ENCODE measurements at regions of chr6 and their contacts with region 1.

Region 1: GRCh38 chr6:6556738-6557505 is 31.6 kb upstream of the LY86 start:
- DNase-seq: peak in 3 of 5 donors; percentile 43 to 52 (median 48)
- ATAC-seq: peak; percentile 36 to 81 (median 78)
- H3K4me3 ChIP-seq: no peak overlapping the region
- H3K27ac ChIP-seq: no peak overlapping the region
- H3K4me1 ChIP-seq: peaks cover 0 to 15% (median 0%) of the 10 kb centered on the region in 12 donors
- H3K27me3 ChIP-seq: no peaks in the 10 kb centered on the region
- CTCF ChIP-seq: peak; percentile 81 to 96 (median 88)
- POLR2A ChIP-seq: no peak

Region 2: DNA sequence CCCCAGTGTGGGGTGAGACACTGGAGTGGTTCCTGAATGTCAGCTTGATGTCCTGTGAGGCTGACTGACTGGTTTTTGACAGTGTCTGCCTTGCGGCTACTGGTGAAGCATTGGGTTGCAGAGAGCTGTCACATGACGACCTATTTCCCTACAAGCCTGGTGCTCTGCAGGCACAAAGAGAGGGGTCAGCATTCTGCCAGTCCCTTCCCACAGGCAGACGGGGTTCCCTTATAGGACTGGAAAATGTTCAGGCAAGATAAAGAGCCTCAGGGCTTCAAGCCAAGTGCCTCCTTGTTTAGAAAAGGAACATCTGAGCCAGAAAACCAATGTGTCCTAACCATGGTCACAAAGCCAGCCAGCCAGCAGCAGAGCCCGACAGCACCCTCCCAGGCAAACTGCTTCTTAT is 42.5 kb after region 1 on chr6:
- intact Hi-C with region 1: loop called in 1 of 10 experiments (anchors 5 kb)
- DNase-seq: peak in 4 of 5 donors; percentile 54 to 73 (median 60)
- ATAC-seq: peak; percentile 82 to 89 (median 86)
- H3K4me3 ChIP-seq: no peak overlapping the region
- H3K27ac ChIP-seq: peak overlapping the region in 4 of 12 donors; percentile 15 to 45 (median 36)
- H3K4me1 ChIP-seq: peaks cover 0 to 46% (median 35%) of the 10 kb centered on the region in 12 donors
- H3K27me3 ChIP-seq: no peaks in the 10 kb centered on the region
- CTCF ChIP-seq: no peak
- POLR2A ChIP-seq: no peak

Region 3: GRCh38 chr6:6610031-6610591 is 53.2 kb after region 1 on chr6:
- intact Hi-C with region 1: no loop called
- DNase-seq: no peak
- ATAC-seq: no peak
- H3K4me3 ChIP-seq: no peak overlapping the region
- H3K27ac ChIP-seq: peak overlapping the region in 1 of 12 donors; percentile 55
- H3K4me1 ChIP-seq: peaks cover 0 to 27% (median 0%) of the 10 kb centered on the region in 12 donors
- H3K27me3 ChIP-seq: no peaks in the 10 kb centered on the region
- CTCF ChIP-seq: no peak
- POLR2A ChIP-seq: no peak

Region 4: DNA sequence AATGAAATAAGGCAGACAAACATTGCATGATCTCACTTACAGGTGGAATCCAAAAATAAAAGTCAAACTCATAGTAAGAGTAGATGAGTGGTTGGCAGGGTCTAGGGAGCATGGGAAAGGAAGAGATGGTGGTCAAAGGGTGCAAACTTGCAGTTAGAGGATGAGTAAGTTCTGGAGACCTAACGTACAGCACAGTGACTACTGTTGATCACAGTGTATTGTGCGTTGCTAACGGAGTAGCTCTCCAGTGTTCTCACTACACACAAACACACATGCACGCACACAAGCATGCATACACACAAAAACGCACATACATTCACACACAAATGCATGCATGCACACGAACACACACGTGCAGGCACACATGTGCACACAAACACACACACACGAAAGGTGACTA is 86.5 kb after region 1 on chr6:
- intact Hi-C with region 1: loop called in 1 of 10 experiments (anchors 10 kb)
- DNase-seq: no peak
- ATAC-seq: no peak
- H3K4me3 ChIP-seq: no peak overlapping the region
- H3K27ac ChIP-seq: no peak overlapping the region
- H3K4me1 ChIP-seq: no peaks in the 10 kb centered on the region
- H3K27me3 ChIP-seq: no peaks in the 10 kb centered on the region
- CTCF ChIP-seq: no peak
- POLR2A ChIP-seq: no peak

Region 5: GRCh38 chr6:6654599-6655575 is 98.0 kb after region 1 on chr6:
- intact Hi-C with region 1: loop called in 6 of 10 experiments (anchors 5 to 10 kb)
- DNase-seq: peak in 4 of 5 donors; percentile 62 to 75 (median 70)
- ATAC-seq: peak; percentile 87 to 93 (median 90)
- H3K4me3 ChIP-seq: no peak overlapping the region
- H3K27ac ChIP-seq: peak overlapping the region in 11 of 12 donors; percentile 34 to 83 (median 73)
- H3K4me1 ChIP-seq: peaks cover 0 to 77% (median 33%) of the 10 kb centered on the region in 12 donors
- H3K27me3 ChIP-seq: no peaks in the 10 kb centered on the region
- CTCF ChIP-seq: no peak
- POLR2A ChIP-seq: no peak

Region 6: DNA sequence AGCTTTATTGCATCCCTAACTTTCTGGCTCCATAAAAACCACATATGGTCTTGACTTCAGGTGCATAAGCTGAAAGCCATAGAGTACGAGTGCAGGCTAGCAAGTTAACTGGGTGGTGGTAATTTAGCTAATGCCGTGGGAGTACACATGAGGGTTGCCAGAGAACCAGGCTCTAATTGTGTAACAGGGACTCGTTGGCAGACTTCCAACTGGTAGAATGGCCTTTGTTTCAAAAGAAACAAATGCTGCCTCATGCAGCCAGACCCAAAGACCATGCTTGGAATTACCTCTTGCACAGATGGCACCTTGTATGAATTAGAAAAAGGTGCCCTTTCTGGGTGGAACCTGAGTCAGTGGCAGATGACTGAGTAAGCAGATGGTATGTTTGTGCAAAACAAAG is 104.8 kb after region 1 on chr6:
- intact Hi-C with region 1: loop called in 5 of 10 experiments (anchors 5 to 10 kb)
- DNase-seq: peak in 4 of 5 donors; percentile 59 to 82 (median 72)
- ATAC-seq: peak; percentile 71 to 80 (median 73)
- H3K4me3 ChIP-seq: no peak overlapping the region
- H3K27ac ChIP-seq: peak overlapping the region in 10 of 12 donors; percentile 18 to 91 (median 58)
- H3K4me1 ChIP-seq: peaks cover 0 to 76% (median 33%) of the 10 kb centered on the region in 12 donors
- H3K27me3 ChIP-seq: no peaks in the 10 kb centered on the region
- CTCF ChIP-seq: no peak
- POLR2A ChIP-seq: no peak

Region 7: GRCh38 chr6:6676910-6677441 is 120.1 kb after region 1 on chr6:
- intact Hi-C with region 1: loop called in 2 of 10 experiments (anchors 5 to 10 kb)
- DNase-seq: peak in 4 of 5 donors; percentile 63 to 75 (median 72)
- ATAC-seq: peak; percentile 73 to 87 (median 86)
- H3K4me3 ChIP-seq: no peak overlapping the region
- H3K27ac ChIP-seq: peak overlapping the region in 11 of 12 donors; percentile 15 to 77 (median 58)
- H3K4me1 ChIP-seq: peaks cover 0 to 45% (median 11%) of the 10 kb centered on the region in 12 donors
- H3K27me3 ChIP-seq: no peaks in the 10 kb centered on the region
- CTCF ChIP-seq: peak; percentile 95 to 99 (median 98)
- POLR2A ChIP-seq: no peak

Region 8: GRCh38 chr6:6998194-6998569 is 441.3 kb after region 1 on chr6:
- intact Hi-C with region 1: no loop called
- DNase-seq: no peak
- ATAC-seq: no peak
- H3K4me3 ChIP-seq: no peak overlapping the region
- H3K27ac ChIP-seq: no peak overlapping the region
- H3K4me1 ChIP-seq: peaks cover 0 to 28% (median 6%) of the 10 kb centered on the region in 12 donors
- H3K27me3 ChIP-seq: no peaks in the 10 kb centered on the region
- CTCF ChIP-seq: no peak
- POLR2A ChIP-seq: no peak

Measured in heart left ventricle (tissue), 16 donors.